ENCODE measurements at regions of chr1 and their contacts with region 1.

Region 1: GRCh38 chr1:153626922-153627796 is at the start of gene S100A13:
- DNase-seq: peak; percentile 70
- H3K4me3 ChIP-seq: peak within 1 kb of the TSS; percentile 84
- CTCF ChIP-seq: peak; percentile 84

Region 2: DNA sequence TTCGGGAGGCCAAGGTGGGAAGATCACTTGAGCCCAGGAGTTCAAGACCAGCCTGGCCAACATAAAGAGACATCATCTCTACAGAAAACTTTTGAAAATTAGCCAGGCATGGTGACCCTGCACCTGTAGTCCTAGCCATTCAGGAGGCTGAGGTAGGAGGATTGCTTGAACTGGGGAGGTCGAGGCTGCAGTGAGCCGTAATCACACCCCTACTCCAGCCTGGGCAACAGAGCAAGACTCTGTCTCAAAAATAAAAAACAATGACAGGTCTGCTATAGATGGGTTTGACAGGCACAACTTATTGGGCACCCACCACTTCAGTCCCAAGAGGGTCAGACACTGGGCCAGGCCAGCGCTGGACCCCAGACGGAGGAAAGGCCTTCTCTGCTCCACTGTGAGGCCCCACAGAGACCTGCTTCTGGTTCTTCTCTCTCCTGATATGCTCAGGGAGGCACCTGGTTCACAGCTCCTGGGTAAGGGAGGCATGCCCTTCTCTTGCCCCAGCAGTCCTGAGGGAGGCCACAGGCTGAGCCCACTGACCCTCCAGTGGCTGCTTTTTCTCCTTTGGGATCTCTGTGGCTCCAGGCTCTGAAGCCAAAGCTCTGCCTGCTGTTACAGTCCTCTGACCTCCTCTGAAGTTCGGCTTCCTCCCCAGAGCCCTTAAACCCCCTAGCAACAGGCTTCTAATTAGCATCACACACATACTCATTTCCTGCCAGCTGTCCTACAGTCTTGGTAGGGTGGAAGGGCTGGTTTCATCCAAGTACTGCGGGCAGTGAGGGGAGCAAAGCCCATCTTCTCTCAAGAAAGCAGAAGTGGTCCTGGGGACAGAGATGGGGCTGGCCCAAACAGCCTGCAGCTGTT is 28.6 kb before region 1 on chr1:
- CTCF ChIA-PET with region 1: interaction called, 10 read pairs
- POLR2A ChIA-PET with region 1: interaction called, 12 read pairs
- DNase-seq: no peak
- H3K4me3 ChIP-seq: no peak overlapping the region
- CTCF ChIP-seq: no peak

Region 3: DNA sequence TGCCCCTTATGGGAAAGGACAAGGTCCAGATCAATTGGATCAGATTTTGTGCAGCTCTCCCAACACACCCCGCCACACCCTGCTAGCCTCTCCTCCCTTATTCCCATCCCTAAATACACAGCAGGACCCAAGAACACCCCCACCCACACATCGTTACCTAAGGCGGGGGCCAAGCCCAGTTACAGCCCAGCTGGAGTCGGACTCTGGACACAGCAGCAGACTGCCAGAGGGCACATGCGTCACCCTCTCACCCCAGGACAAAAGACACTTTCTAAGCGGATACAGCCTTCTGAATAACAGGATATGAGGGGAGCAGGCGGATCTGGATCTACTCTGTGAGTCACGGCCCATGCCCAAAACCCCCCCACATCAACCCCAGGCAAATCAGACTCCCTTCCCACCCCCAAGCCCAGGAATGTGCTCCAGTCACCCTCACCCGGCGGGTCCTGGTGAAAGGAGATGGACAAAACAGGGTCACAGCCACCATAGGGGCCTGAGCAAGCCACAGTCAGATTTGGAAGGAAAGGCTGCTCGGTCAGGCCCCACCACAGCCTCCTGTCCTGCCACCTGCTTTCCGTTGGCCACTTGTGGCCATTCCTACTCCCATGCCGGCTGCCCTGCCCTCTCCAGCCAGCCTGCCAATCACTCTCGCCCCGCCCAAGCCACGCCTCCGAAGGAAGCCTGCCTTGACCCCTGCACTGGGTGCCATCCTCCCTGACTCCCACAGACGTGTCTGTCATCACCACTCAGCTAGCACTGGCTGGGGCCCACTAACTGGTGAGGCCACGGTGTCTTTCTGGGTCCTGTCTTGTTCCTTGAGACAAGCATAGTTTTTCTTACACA is 18.2 kb before region 1 on chr1:
- CTCF ChIA-PET with region 1: interaction called, 178 read pairs
- POLR2A ChIA-PET with region 1: interaction called, 127 read pairs
- DNase-seq: no peak
- H3K4me3 ChIP-seq: peak overlapping the region; percentile 58
- CTCF ChIP-seq: no peak

Region 4: DNA sequence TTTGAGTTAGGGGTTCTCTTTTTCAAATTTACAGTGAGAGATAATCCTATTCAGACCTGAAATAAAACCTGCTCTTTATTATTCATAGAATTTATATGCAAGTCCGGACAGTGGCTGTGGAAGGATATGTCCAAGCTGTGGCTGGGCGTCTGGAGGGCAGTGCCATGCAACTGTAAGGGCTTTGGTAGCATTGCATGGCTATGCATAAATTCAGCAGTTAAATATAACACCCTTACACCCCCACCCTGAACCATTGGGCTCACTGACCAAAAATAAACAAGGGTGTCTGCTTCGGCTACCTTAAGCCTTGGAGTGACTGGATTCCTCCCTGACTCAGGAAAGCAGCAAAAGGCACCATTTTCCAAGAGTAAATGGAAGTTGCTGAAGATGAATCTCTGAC is 12.1 kb after region 1 on chr1:
- CTCF ChIA-PET with region 1: interaction called, 178 read pairs
- POLR2A ChIA-PET with region 1: interaction called, 8 read pairs
- DNase-seq: no peak
- H3K4me3 ChIP-seq: no peak overlapping the region
- CTCF ChIP-seq: no peak

Region 5: DNA sequence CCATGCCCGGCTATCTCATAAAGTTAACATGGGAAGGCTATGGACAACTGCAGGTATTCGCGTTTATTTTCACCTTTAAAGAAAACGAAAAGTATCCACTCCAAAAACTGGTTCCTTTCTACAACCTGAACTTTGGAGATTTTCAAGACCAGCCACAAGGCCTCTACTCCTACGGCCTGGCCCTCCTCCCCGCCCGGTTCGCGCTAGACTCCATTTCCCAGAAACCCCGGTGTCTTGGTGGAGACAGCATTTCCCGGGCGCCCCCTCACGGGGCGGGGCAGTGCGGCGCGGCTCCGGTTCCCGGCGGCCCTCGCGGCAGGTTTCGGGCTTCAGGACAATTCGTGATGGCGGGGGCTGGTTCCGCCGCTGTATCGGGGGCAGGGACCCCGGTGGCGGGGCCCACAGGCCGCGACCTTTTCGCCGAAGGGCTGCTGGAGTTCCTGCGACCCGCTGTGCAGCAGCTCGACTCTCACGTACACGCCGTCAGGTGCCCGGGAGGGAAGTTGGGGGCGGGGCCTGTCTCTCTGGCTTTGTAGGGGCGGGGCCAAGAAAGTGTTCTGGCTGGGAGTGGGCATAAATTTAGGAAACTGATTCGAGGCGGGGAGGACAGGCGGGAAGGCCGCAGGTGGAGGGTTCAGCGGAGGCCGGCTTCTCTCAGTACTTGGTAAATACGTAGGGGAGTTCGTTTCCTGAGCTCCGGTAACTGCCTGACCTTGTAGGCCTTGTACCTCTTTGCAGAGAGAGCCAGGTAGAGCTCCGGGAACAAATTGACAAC is 31.4 kb after region 1 on chr1 and contains the start of gene SNAPIN:
- CTCF ChIA-PET with region 1: no interaction called
- POLR2A ChIA-PET with region 1: interaction called, 11 read pairs
- DNase-seq: peak; percentile 23
- H3K4me3 ChIP-seq: peak within 1 kb of the TSS; percentile 92
- CTCF ChIP-seq: peak; percentile 45

Region 6: GRCh38 chr1:153698020-153698931 is 71.1 kb after region 1 on chr1:
- CTCF ChIA-PET with region 1: no interaction called
- POLR2A ChIA-PET with region 1: no interaction called
- DNase-seq: no peak
- H3K4me3 ChIP-seq: no peak overlapping the region
- CTCF ChIP-seq: no peak